Activated CD8-positive, alpha-beta T cell treated with anti-CD3 and anti-CD28 coated beads, Interleukin-2, amount 10 ng/mL, durations not matched to agents 7 days and 5 days (primary cell): ENCODE measurements at regions of chr1 and their contacts with region 1.

Region 1: DNA sequence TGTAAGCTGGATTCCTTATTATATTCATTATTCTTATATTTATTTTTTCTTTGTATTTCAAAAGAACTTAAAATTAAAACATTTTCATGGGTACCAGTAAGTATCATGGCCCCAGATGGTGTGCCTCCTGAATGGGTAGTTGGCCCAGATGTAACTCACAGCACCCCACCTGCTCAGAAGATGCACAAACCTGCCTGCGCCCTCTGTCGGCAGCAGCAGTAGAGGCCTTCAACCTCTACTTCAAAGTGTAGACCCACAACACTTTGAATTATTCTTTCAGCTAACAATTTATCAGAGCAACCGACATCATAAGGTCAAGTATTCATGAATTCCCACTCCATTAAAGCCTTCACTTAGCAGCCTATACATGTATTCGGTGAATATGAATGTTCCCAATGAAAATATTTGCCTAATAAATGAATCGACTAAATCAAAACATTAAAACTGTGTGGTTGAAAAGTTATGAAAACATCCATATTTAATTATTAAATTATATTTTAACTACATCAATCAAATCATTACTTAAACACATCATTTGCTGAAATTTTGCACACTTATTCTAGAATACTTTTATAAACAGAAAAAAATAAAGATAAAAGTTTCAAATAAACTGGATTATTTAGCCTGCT is 25.4 kb downstream of the PIGM start:
- DNase-seq: peak; percentile 84
- ATAC-seq: peak; percentile 92
- H3K4me3 Mint-ChIP-seq: no peak overlapping the region
- H3K27ac Mint-ChIP-seq: no peak overlapping the region
- H3K4me1 Mint-ChIP-seq: no peaks in the 10 kb centered on the region
- H3K27me3 Mint-ChIP-seq: peaks cover 21% of the 10 kb centered on the region

Region 2: DNA sequence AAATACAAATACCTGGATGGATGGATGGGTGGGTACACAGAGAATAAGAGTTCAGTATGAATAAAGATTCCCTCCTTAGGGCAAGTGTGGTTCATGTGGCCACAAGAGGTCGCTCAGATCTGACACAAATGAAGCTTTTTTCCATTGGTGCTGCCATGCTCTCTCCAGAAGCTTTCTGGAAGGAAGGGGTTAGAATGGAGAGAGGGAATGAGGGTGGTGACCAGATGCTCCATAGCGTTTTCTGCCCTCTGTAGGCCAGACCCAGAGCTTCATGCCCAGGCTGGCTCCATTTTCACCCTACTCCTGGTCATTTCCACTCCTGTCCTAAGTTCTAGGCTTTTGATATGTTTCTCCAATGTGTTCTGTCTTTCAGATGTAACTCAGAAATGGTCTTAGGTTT is 207.5 kb before region 1 on chr1:
- CTCF ChIA-PET with region 1: interaction called, 48 read pairs
- POLR2A ChIA-PET with region 1: no interaction called
- DNase-seq: peak; percentile 66
- ATAC-seq: peak; percentile 60
- H3K4me3 Mint-ChIP-seq: no peak overlapping the region
- H3K27ac Mint-ChIP-seq: no peak overlapping the region
- H3K4me1 Mint-ChIP-seq: peaks cover 25% of the 10 kb centered on the region
- H3K27me3 Mint-ChIP-seq: peaks cover 42% of the 10 kb centered on the region

Region 3: GRCh38 chr1:159936273-159936904 is 70.0 kb before region 1 on chr1:
- CTCF ChIA-PET with region 1: interaction called, 184 read pairs
- POLR2A ChIA-PET with region 1: no interaction called
- DNase-seq: peak; percentile 83
- ATAC-seq: peak; percentile 81
- H3K4me3 Mint-ChIP-seq: no peak overlapping the region
- H3K27ac Mint-ChIP-seq: no peak overlapping the region
- H3K4me1 Mint-ChIP-seq: peaks cover 5% of the 10 kb centered on the region
- H3K27me3 Mint-ChIP-seq: peaks cover 29% of the 10 kb centered on the region

Region 4: GRCh38 chr1:159959451-159959850 is 47.0 kb before region 1 on chr1:
- CTCF ChIA-PET with region 1: interaction called, 17 read pairs
- POLR2A ChIA-PET with region 1: no interaction called
- DNase-seq: no peak
- ATAC-seq: no peak
- H3K4me3 Mint-ChIP-seq: no peak overlapping the region
- H3K27ac Mint-ChIP-seq: no peak overlapping the region
- H3K4me1 Mint-ChIP-seq: no peaks in the 10 kb centered on the region
- H3K27me3 Mint-ChIP-seq: peaks cover 22% of the 10 kb centered on the region

Region 5: GRCh38 chr1:159991513-159991912 is 14.9 kb before region 1 on chr1:
- CTCF ChIA-PET with region 1: interaction called, 57 read pairs
- POLR2A ChIA-PET with region 1: no interaction called
- DNase-seq: peak; percentile 21
- ATAC-seq: no peak
- H3K4me3 Mint-ChIP-seq: no peak overlapping the region
- H3K27ac Mint-ChIP-seq: no peak overlapping the region
- H3K4me1 Mint-ChIP-seq: peaks cover 7% of the 10 kb centered on the region
- H3K27me3 Mint-ChIP-seq: peaks cover 15% of the 10 kb centered on the region

Region 6: GRCh38 chr1:160040476-160040875 is 34.0 kb after region 1 on chr1:
- CTCF ChIA-PET with region 1: interaction called, 38 read pairs
- POLR2A ChIA-PET with region 1: no interaction called
- DNase-seq: no peak
- ATAC-seq: no peak
- H3K4me3 Mint-ChIP-seq: no peak overlapping the region
- H3K27ac Mint-ChIP-seq: no peak overlapping the region
- H3K4me1 Mint-ChIP-seq: no peaks in the 10 kb centered on the region
- H3K27me3 Mint-ChIP-seq: peaks cover 7% of the 10 kb centered on the region

Region 7: DNA sequence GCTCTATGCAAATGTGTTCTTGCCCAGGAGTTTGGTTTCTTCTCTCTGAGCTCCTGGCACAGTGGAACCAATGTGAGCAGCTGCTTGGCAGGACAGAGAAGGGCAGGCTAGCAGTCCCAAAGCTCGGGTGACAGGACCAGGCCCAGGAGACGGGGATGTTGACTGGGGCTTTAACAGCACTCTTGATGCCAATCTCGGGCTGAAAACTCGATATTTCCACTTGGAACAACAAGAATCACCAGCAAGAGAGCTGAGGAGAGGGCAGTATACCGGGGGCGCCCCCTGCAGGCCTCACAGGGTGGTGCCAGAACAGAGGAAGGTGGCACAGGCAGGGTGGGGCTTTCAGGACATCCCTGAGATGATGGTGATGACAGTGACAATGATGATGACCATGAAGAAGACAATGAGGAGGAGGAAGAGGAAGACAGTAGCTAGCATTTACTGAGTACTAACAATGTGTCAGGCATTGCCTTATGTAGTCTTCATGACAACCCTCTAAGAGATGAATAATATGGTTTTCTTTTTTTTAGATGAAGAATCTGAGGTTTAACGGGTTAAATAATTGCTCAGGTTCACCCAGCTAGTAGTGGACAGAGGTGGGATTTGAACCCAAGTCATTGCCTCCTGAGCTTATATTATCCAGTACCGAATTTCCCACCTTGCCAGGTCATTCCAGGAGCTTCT is 72.2 kb after region 1 on chr1:
- CTCF ChIA-PET with region 1: interaction called, 15 read pairs
- POLR2A ChIA-PET with region 1: no interaction called
- DNase-seq: peak; percentile 78
- ATAC-seq: peak; percentile 93
- H3K4me3 Mint-ChIP-seq: no peak overlapping the region
- H3K27ac Mint-ChIP-seq: no peak overlapping the region
- H3K4me1 Mint-ChIP-seq: peaks cover 5% of the 10 kb centered on the region
- H3K27me3 Mint-ChIP-seq: peaks cover 49% of the 10 kb centered on the region

Region 8: GRCh38 chr1:160161965-160162705 is 155.7 kb after region 1 on chr1:
- CTCF ChIA-PET with region 1: no interaction called
- POLR2A ChIA-PET with region 1: no interaction called
- DNase-seq: no peak
- ATAC-seq: no peak
- H3K4me3 Mint-ChIP-seq: no peak overlapping the region
- H3K27ac Mint-ChIP-seq: no peak overlapping the region
- H3K4me1 Mint-ChIP-seq: peaks cover 10% of the 10 kb centered on the region
- H3K27me3 Mint-ChIP-seq: peaks cover 37% of the 10 kb centered on the region

Region 9: DNA sequence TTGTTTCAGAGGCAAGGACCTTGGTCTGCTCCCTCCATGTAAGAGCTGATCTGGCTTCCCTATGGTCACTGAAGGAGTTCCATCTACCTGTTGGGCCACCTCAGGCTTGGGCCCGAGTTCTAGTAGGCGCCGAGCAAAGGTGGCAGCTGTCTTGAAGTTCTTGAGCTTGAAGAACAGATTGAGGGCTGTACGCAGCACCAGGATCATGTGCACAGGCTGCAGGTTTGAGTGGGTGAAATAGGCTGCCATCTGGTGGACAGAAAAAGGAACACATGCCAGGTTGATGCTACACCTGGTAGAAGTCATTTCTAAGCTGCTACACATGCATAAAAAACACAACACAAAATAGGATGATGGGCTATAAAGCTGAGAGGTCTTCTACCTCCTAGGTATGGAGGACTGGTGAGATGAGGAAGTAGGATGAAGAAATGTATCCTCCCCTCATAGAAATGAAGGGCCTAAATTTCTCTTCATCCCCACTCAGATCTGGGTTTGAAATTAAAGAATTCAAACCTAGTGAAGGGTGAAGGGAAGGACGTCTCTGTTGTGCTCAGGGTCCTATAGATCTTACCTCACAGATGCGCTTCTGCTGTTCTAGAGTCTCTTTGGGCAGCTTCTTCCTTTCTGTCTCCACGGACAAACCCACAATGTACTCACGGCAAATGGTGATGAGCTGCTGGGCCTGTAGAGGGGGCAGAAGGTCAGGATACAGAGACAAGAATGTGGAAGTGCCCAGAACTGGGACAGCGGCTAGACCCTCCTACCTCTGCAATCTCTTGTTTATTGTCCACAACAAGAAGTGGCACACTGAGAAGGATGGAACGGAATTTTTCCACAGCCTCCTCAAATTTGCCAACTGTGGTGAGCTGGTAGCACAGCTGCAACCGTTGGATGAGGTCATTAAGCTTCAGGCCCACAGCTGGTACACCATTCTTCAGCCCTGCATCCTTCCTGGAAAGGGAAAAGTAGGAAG is 285.1 kb after region 1 on chr1:
- CTCF ChIA-PET with region 1: no interaction called
- POLR2A ChIA-PET with region 1: no interaction called
- DNase-seq: peak; percentile 78
- ATAC-seq: peak; percentile 90
- H3K4me3 Mint-ChIP-seq: no peak overlapping the region
- H3K27ac Mint-ChIP-seq: no peak overlapping the region
- H3K4me1 Mint-ChIP-seq: no peaks in the 10 kb centered on the region
- H3K27me3 Mint-ChIP-seq: no peaks in the 10 kb centered on the region